ENCODE measurements at regions of chr14 and their contacts with region 1.

Region 1: GRCh38 chr14:96100161-96101029 is 61.2 kb downstream of the C14orf132 start:
- DNase-seq: peak; percentile 74
- H3K27ac ChIP-seq: no peak overlapping the region
- CTCF ChIP-seq: peak; percentile 84

Region 2: DNA sequence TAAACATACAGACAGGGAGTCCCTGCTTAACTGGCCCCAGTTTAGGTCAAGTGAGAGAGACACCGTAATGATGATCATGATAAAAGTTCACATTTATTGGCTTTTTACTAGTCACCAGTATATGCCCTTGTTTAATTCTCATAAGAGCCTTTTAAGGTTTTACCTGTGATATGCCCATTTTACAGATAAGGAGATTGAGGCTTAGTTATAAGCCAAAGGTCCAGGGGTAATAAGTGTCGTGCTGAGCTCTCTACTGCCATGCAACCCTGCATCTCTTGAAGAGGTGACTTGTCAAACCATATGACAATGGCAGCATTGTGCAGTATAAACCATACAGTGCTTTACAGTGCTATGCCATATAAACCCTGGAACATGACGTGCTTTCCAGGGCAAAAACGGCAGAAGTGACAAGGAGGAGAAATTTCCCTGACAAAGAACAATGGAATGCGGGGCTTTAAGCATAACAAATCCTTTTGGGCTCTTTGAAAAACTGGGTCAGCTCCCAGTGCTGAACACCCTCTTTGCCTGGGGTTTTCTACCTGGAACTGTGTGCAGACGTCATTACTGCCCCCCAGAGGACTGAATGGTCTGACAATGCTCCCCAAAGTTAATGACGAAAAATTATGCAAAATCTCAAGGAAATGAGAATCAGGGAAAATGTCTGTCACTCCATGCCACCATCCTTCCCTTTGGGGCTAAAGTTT is 120.9 kb before region 1 on chr14:
- CTCF ChIA-PET with region 1: no interaction called
- POLR2A ChIA-PET with region 1: no interaction called
- DNase-seq: no peak
- H3K27ac ChIP-seq: no peak overlapping the region
- CTCF ChIP-seq: no peak

Region 3: GRCh38 chr14:96056509-96057422 is 43.6 kb before region 1 on chr14:
- CTCF ChIA-PET with region 1: interaction called, 27 read pairs
- POLR2A ChIA-PET with region 1: no interaction called
- DNase-seq: peak; percentile 46
- H3K27ac ChIP-seq: no peak overlapping the region
- CTCF ChIP-seq: 0 out of 2 replicates have a peak, but pooled peaks have one; percentile 9

Region 4: GRCh38 chr14:96112032-96112431 is 11.6 kb after region 1 on chr14:
- CTCF ChIA-PET with region 1: no interaction called
- POLR2A ChIA-PET with region 1: no interaction called
- DNase-seq: no peak
- H3K27ac ChIP-seq: no peak overlapping the region
- CTCF ChIP-seq: no peak